Calu3 (cell line): ENCODE measurements at regions of chr4 and their contacts with region 1.

Region 1: DNA sequence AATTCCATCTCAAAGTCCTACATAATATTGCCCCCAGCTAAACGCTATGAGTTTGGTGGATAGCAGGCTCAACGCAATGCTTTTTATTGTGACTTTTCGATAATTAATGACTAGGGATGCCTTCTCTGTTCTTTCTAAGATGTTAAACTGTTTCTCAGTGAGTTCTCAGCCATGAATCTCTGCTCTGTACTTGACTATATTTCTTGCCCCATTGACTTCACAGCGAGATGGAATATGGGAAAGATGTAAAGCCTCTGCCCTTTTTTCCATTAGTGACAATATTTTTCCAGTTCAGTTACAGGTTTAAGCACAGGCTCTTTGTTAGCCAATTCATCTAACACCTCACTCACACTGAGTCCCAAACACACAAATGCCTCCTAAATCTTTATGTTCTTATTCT is 1022.0 kb downstream of the ADGRL3 start:
- DNase-seq: no peak
- H3K4me3 Mint-ChIP-seq: no peak overlapping the region
- H3K27ac Mint-ChIP-seq: no peak overlapping the region
- H3K4me1 Mint-ChIP-seq: no peaks in the 10 kb centered on the region
- H3K27me3 Mint-ChIP-seq: no peaks in the 10 kb centered on the region
- CTCF ChIP-seq: no peak

Region 2: DNA sequence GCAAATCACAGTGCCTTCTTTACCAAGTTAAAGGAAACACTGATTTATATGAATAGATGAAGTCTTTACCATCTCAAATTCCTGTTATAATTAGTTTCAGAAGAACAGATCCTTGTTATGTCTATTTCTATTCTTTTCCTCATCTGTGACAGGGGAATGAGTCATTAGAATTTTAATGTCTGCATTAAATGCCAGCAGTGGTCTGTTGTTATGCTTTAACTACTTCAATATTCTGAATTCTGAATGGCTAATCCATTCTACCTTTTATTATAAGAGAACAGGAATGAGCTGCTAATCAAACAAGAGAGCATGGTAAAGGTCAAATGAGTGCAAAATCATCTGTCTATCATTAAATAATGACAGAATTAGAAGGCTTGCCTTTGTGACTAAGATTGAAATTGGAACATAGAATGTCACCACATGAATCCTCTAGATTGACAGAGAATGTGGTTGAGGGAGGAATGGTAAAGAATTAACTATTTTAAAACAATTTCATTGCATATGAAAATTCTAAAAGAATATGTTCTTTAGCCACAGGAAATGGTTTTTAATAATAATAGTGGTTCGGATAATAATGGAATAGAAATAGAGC is 86.5 kb before region 1 on chr4:
- CTCF ChIA-PET with region 1: no interaction called
- intact Hi-C with region 1: loop called (anchors 2 kb)
- DNase-seq: no peak
- H3K4me3 Mint-ChIP-seq: no peak overlapping the region
- H3K27ac Mint-ChIP-seq: no peak overlapping the region
- H3K4me1 Mint-ChIP-seq: no peaks in the 10 kb centered on the region
- H3K27me3 Mint-ChIP-seq: no peaks in the 10 kb centered on the region
- CTCF ChIP-seq: no peak

Region 3: DNA sequence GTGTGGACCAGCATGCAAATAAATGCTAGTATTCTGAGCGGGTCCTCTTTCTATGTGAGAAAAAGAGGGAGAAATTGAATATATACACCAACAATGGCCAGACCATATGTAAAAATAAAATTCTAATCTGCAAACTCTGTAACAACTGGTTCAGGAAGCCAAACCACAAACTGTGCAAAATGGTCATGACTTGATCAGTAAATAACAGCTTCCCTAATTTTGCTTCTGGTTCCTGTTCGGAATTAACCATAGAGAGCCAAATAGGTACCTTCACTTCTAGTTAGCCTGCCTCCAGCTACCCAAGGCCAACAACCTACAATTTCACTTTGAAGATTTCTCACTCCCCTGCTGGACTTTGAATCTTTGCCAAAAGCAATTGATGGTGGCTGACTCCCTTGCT is 291.2 kb after region 1 on chr4:
- CTCF ChIA-PET with region 1: no interaction called
- intact Hi-C with region 1: no loop called
- DNase-seq: no peak
- H3K4me3 Mint-ChIP-seq: no peak overlapping the region
- H3K27ac Mint-ChIP-seq: no peak overlapping the region
- H3K4me1 Mint-ChIP-seq: no peaks in the 10 kb centered on the region
- H3K27me3 Mint-ChIP-seq: no peaks in the 10 kb centered on the region
- CTCF ChIP-seq: no peak